Naive thymus-derived CD4-positive, alpha-beta T cell (primary cell): ENCODE measurements at regions of chr6 and their contacts with region 1.

Region 1: DNA sequence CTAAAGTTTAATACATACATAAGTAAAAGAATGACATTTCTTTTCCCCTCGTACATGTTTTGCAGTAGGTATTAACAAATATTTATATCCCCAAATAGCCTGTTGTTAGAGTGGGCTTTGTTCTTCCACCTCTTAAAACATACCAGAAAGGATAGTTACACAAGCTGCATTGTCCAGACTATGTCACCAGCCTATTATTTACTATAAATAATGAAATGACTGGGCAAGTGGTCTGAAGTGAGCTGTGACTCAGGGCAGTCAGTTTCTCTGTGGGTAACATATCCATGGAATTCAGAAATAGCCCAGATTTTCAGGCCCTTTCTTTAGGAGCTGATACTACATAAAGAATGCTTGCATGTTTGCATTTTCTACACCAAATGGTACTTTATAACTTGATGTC is 60.1 kb downstream of the FUT9 start:
- DNase-seq: no peak
- ATAC-seq: no peak
- H3K4me3 ChIP-seq: no peak overlapping the region
- H3K4me3 Mint-ChIP-seq: no peak overlapping the region
- H3K27ac ChIP-seq: no peak overlapping the region
- H3K27ac Mint-ChIP-seq: no peak overlapping the region
- H3K4me1 ChIP-seq: no peaks in the 10 kb centered on the region
- H3K4me1 Mint-ChIP-seq: no peaks in the 10 kb centered on the region
- H3K27me3 ChIP-seq: no peaks in the 10 kb centered on the region
- H3K27me3 Mint-ChIP-seq: no peaks in the 10 kb centered on the region

Region 2: GRCh38 chr6:96157018-96157565 is 81.3 kb after region 1 on chr6:
- CTCF ChIA-PET with region 1: no interaction called
- POLR2A ChIA-PET with region 1: no interaction called
- intact Hi-C with region 1: no loop called
- DNase-seq: no peak
- ATAC-seq: no peak
- H3K4me3 ChIP-seq: no peak overlapping the region
- H3K4me3 Mint-ChIP-seq: peak overlapping the region in 1 of 10 donors; percentile 28
- H3K27ac ChIP-seq: no peak overlapping the region
- H3K27ac Mint-ChIP-seq: peak overlapping the region in 1 of 9 donors; percentile 31
- H3K4me1 ChIP-seq: no peaks in the 10 kb centered on the region
- H3K4me1 Mint-ChIP-seq: peaks cover 0 to 9% (median 0%) of the 10 kb centered on the region in 7 donors
- H3K27me3 ChIP-seq: no peaks in the 10 kb centered on the region
- H3K27me3 Mint-ChIP-seq: no peaks in the 10 kb centered on the region

Region 3: GRCh38 chr6:96468681-96469224 is 392.9 kb after region 1 on chr6:
- CTCF ChIA-PET with region 1: no interaction called
- POLR2A ChIA-PET with region 1: no interaction called
- intact Hi-C with region 1: loop called in 1 of 2 experiments (anchors 10 kb)
- DNase-seq: no peak
- ATAC-seq: no peak
- H3K4me3 ChIP-seq: no peak overlapping the region
- H3K4me3 Mint-ChIP-seq: no peak overlapping the region
- H3K27ac ChIP-seq: no peak overlapping the region
- H3K27ac Mint-ChIP-seq: no peak overlapping the region
- H3K4me1 ChIP-seq: peaks cover 0 to 16% of the 10 kb centered on the region in 2 donors
- H3K4me1 Mint-ChIP-seq: peaks cover 0 to 24% (median 5%) of the 10 kb centered on the region in 7 donors
- H3K27me3 ChIP-seq: no peaks in the 10 kb centered on the region
- H3K27me3 Mint-ChIP-seq: peaks cover 0 to 7% (median 5%) of the 10 kb centered on the region in 5 donors